Psoas muscle (tissue), 8 donors: ENCODE measurements at regions of chr12 and their contacts with region 1.

Region 1: GRCh38 chr12:95918194-95918993 is 24.0 kb downstream of the CCDC38 start:
- DNase-seq: no peak
- ATAC-seq: peak; percentile 44 to 75 (median 66)
- H3K4me3 ChIP-seq: no peak overlapping the region
- H3K27ac ChIP-seq: no peak overlapping the region
- H3K4me1 ChIP-seq: no peaks in the 10 kb centered on the region
- H3K27me3 ChIP-seq: no peaks in the 10 kb centered on the region
- CTCF ChIP-seq: peak; percentile 76

Region 2: GRCh38 chr12:95959107-95959506 is 40.7 kb after region 1 on chr12:
- intact Hi-C with region 1: no loop called
- DNase-seq: no peak
- ATAC-seq: no peak
- H3K4me3 ChIP-seq: no peak overlapping the region
- H3K27ac ChIP-seq: no peak overlapping the region
- H3K4me1 ChIP-seq: no peaks in the 10 kb centered on the region
- H3K27me3 ChIP-seq: peaks cover 0 to 2% (median 0%) of the 10 kb centered on the region in 3 donors
- CTCF ChIP-seq: no peak

Region 3: GRCh38 chr12:95998611-95999286 is 80.4 kb after region 1 on chr12:
- intact Hi-C with region 1: loop called (anchors 2 to 5 kb)
- DNase-seq: no peak
- ATAC-seq: peak; percentile 64 to 89 (median 76)
- H3K4me3 ChIP-seq: no peak overlapping the region
- H3K27ac ChIP-seq: no peak overlapping the region
- H3K4me1 ChIP-seq: no peaks in the 10 kb centered on the region
- H3K27me3 ChIP-seq: no peaks in the 10 kb centered on the region
- CTCF ChIP-seq: peak; percentile 59

Region 4: DNA sequence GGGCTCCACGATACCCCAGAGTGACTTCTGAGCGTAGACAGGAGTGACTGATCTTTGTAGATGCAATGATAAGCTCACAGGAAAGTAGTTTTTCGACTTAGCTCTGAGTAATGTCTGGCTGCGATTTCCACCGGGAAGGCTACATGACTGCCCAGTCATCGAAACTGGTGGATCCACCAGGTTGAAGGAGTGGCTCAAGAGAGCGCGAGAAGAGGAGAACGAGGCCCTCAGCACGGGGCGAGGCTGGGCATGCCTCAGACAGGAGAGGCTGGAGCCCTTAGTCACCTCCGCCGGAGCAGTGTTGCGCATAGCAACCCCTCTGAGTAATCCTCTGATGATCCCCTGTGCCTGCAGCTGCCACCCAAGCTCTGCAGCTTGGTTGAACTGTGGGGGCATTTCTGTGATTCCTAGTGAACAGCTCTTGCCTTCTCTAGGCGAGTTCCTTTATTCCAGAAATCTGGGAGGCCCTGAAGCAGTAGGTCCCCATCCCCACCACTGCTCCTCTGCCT is 301.4 kb after region 1 on chr12:
- intact Hi-C with region 1: loop called in 1 of 2 experiments (anchors 10 kb)
- DNase-seq: no peak
- ATAC-seq: peak in 3 of 4 donors; percentile 27 to 60 (median 36)
- H3K4me3 ChIP-seq: no peak overlapping the region
- H3K27ac ChIP-seq: no peak overlapping the region
- H3K4me1 ChIP-seq: peaks cover 4% of the 10 kb centered on the region
- H3K27me3 ChIP-seq: peaks cover 0 to 7% (median 0%) of the 10 kb centered on the region in 3 donors
- CTCF ChIP-seq: no peak

Region 5: GRCh38 chr12:96516472-96517430 is 598.4 kb after region 1 on chr12:
- intact Hi-C with region 1: loop called in 1 of 2 experiments (anchors 5 kb)
- DNase-seq: peak; percentile 65 to 75
- ATAC-seq: peak in 1 of 4 donors; percentile 66
- H3K4me3 ChIP-seq: no peak overlapping the region
- H3K27ac ChIP-seq: no peak overlapping the region
- H3K4me1 ChIP-seq: no peaks in the 10 kb centered on the region
- H3K27me3 ChIP-seq: no peaks in the 10 kb centered on the region
- CTCF ChIP-seq: peak; percentile 54